CD4-positive, alpha-beta memory T cell (primary cell): ENCODE measurements at regions of chr12 and their contacts with region 1.

Region 1: DNA sequence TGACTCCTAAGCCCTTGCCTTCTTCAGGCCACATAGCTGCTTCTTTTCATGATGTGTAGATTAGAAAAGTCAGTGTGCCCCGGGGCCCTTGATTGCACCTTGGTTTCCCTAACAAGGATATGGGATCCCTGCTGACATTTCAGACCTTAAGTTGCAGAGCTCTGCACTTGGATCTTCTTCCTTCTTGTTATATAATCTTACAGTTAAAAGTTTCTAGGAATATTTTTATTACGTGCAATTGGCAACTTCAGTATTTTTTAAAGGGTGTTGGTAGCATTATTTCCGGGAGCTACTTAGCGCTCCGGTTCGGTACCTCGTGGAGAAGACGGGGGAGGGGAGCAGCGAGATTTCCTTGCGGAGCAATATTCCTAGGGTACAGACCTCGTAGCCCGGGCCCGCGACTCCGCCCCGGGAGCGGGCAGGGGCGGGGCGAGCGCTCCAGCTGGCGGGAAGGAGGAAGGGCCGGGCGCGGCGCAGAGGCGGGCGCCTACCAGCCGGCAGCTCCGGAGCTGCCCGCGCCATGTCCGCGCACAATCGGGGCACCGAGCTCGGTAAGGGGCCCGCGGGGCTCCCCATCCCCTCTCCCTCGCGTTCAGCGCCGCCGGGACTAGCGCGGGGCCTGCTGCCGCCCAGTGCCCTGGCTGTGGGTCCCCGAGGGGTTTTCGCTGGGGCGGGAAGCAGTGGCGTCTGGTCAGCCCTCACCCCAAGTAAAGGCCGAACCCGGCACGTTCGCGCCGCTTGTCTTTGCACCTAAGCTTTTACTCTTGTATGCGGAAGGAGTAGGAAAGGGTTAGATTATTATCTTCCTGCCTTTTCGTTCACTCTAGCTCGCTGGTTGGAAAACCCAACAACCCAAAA is at the start of gene DERA:
- DNase-seq: peak; percentile 49 to 65 (median 56)
- H3K4me3 ChIP-seq: peak within 1 kb of the TSS; percentile 70 to 92
- H3K4me3 Mint-ChIP-seq: peak within 1 kb of the TSS; percentile 89 to 96 (median 94)
- H3K27ac ChIP-seq: peak within 1 kb of the TSS; percentile 75
- H3K27ac Mint-ChIP-seq: peak within 1 kb of the TSS; percentile 74 to 96 (median 91)
- H3K4me1 ChIP-seq: peaks cover 7% of the 10 kb centered on the region
- H3K4me1 Mint-ChIP-seq: peaks cover 15 to 20% (median 18%) of the 10 kb centered on the region in 4 donors
- H3K27me3 ChIP-seq: no peaks in the 10 kb centered on the region
- H3K27me3 Mint-ChIP-seq: no peaks in the 10 kb centered on the region
- total RNA-seq, gene DERA: 11.2 to 11.4 TPM

Region 2: DNA sequence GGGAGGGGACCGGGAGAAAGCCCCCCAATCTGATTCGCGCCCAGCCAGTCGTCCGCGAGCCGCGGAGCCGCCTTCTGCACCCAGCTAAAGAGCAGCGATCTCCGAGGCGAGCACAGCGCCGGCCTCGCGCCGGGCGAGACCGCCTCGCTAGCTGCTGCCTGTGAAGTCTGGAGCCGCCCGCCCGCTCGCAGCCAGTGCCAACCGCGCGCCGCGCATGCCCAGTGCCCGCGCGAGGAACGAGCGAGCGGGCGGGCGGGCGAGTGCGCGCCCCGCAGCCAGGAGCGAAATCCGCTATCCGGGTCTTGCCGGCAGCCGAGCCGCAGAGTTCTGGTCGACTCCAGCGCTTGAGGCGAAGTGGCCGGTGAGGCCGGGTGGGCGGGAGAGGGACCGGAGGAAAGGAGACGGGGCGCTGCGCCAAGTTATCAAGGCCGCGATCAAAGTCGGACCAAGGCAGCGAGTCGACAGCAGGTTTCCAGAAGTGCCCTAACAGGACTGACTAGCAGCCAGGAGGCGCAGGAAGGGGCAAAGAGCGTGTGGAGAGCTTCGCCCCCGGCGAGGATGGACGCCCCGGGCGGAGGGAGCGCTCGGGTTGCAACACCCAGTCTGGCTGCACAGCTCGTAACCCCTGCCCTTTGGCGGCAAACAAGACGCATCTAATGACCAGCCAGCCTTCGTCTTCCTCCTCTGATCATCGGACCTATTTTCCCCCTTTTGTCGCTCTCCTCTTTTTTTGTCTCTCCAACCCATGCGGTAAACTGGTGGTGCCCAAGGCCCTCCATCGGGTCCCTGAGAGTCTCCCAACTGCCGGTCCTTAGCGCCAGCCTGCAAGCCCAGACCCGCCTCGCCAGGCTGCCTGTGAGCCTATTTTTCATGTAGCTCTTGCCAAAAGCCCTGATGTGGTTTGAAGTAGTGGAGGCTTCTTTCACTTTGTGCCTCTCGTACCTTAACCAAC is 121.6 kb before region 1 on chr12 and contains the start of gene EPS8:
- CTCF ChIA-PET with region 1: no interaction called
- POLR2A ChIA-PET with region 1: interaction called, 9 read pairs
- intact Hi-C with region 1: loop called (anchors 5 kb)
- DNase-seq: peak; percentile 85 to 90 (median 90)
- H3K4me3 ChIP-seq: peak within 1 kb of the TSS; percentile 58 to 78
- H3K4me3 Mint-ChIP-seq: peak within 1 kb of the TSS; percentile 90 to 98 (median 96)
- H3K27ac ChIP-seq: peak within 1 kb of the TSS; percentile 38
- H3K27ac Mint-ChIP-seq: peak within 1 kb of the TSS; percentile 86 to 93 (median 90)
- H3K4me1 ChIP-seq: peaks cover 19% of the 10 kb centered on the region
- H3K4me1 Mint-ChIP-seq: peaks cover 12 to 19% (median 15%) of the 10 kb centered on the region in 4 donors
- H3K27me3 ChIP-seq: peaks cover 21% of the 10 kb centered on the region
- H3K27me3 Mint-ChIP-seq: peaks cover 12 to 29% of the 10 kb centered on the region in 2 donors
- total RNA-seq, gene EPS8: 2.6 to 3.8 TPM